Natural killer cell (primary cell): ENCODE measurements at regions of chr1 and their contacts with region 1.

Region 1: DNA sequence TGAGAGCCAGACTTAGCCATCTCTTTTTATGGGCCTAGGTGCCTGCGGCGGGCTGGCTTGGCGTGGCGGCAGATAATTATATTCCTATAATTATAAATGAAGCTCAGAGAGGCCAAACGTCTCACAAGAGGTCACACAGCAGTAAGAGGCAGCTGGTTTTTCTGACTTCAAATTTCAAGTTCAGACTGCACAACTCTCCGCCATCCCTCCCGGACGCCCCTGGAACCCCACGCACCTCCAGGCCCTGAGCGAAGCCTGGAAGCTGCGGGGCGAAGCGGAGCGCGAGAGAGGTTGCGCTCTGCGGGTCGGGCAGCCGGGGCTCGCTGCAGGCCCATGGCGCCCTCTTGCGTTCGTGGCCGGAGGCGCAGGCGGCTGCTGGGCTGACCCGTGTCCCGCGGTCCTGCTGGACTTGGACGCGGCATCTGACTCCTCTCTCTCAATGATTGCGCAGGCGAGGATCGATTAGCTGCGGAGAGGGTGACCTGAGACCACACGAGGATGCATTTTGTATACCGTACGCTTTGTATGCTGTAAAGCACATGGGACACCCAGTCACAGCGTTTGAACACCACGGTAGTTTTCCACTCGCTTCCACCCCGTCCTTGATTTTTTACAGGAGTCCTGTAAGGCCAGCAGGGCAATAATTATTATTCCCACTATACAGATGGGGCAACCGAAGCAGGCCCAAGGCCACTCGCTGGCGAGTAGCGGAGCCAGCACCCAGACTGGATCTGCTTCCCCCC is 272.7 kb downstream of the FOXD2 start:
- DNase-seq: peak; percentile 69 to 74
- ATAC-seq: peak; percentile 74 to 90 (median 75)
- H3K4me3 ChIP-seq: no peak overlapping the region
- H3K4me3 Mint-ChIP-seq: peak overlapping the region; percentile 4
- H3K27ac ChIP-seq: no peak overlapping the region
- H3K27ac Mint-ChIP-seq: no peak overlapping the region
- H3K4me1 ChIP-seq: peaks cover 8% of the 10 kb centered on the region
- H3K4me1 Mint-ChIP-seq: peaks cover 0 to 10% of the 10 kb centered on the region in 2 donors
- H3K27me3 ChIP-seq: peaks cover 29% of the 10 kb centered on the region
- H3K27me3 Mint-ChIP-seq: peaks cover 29 to 58% of the 10 kb centered on the region in 2 donors
- CTCF ChIP-seq: peak; percentile 85

Region 2: DNA sequence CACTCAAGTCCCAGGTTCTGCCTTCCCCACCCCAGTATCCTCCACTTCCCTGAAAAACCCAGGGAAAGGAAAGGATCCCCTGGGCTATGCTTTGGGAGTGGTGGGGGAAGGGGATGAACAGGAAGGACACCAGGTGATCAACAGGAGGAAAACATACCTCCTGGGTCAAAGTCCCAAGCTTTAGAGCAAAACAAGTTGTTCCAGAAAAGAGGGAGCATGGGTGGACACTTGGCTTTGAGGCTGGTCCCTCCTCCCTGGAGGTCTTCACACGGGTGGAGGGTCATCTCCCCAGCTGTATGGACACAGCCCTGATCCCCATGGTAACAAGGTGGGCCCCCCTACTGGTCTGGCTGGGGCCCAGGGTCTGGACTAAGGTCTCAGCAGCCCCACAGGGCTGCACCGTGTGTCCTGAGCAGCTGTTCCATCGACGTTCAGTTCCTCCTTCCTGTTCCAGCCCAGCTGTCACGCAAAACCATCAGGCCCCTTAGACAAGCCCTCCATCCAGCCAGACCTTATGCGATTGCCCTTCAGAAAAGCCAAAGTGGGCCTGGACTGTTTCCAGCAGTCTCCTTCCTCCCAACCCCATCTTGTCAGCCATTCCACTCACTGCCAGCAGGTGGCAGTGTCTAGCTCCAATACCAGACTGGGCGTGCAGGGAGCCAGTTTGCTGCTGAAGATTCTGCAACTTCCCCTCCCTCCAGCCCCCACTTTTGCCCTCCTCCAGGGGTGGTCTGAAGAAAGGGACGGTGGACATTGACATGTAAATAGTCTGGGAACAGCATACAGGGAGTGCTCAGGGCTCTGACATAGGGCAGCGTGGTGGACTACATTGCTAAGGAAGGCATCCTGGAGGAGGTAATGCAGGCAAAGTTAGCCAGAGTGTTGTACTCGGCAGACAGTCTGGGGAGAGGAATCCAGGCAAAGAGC is 517.8 kb before region 1 on chr1:
- intact Hi-C with region 1: loop called (anchors 1 kb)
- DNase-seq: peak; percentile 57 to 80
- ATAC-seq: peak; percentile 77 to 93 (median 86)
- H3K4me3 ChIP-seq: no peak overlapping the region
- H3K4me3 Mint-ChIP-seq: no peak overlapping the region
- H3K27ac ChIP-seq: no peak overlapping the region
- H3K27ac Mint-ChIP-seq: no peak overlapping the region
- H3K4me1 ChIP-seq: peaks cover 4% of the 10 kb centered on the region
- H3K4me1 Mint-ChIP-seq: peaks cover 5% of the 10 kb centered on the region in 2 donors
- H3K27me3 ChIP-seq: no peaks in the 10 kb centered on the region
- H3K27me3 Mint-ChIP-seq: peaks cover 7 to 13% of the 10 kb centered on the region in 2 donors
- CTCF ChIP-seq: peak; percentile 89

Region 3: GRCh38 chr1:47388891-47389238 is 321.6 kb before region 1 on chr1:
- intact Hi-C with region 1: loop called (anchors 2 kb)
- DNase-seq: peak; percentile 25 to 56
- ATAC-seq: peak in 2 of 3 donors; percentile 57 to 73
- H3K4me3 ChIP-seq: no peak overlapping the region
- H3K4me3 Mint-ChIP-seq: no peak overlapping the region
- H3K27ac ChIP-seq: no peak overlapping the region
- H3K27ac Mint-ChIP-seq: no peak overlapping the region
- H3K4me1 ChIP-seq: no peaks in the 10 kb centered on the region
- H3K4me1 Mint-ChIP-seq: no peaks in the 10 kb centered on the region
- H3K27me3 ChIP-seq: no peaks in the 10 kb centered on the region
- H3K27me3 Mint-ChIP-seq: peaks cover 0 to 4% of the 10 kb centered on the region in 2 donors
- CTCF ChIP-seq: peak; percentile 57

Region 4: DNA sequence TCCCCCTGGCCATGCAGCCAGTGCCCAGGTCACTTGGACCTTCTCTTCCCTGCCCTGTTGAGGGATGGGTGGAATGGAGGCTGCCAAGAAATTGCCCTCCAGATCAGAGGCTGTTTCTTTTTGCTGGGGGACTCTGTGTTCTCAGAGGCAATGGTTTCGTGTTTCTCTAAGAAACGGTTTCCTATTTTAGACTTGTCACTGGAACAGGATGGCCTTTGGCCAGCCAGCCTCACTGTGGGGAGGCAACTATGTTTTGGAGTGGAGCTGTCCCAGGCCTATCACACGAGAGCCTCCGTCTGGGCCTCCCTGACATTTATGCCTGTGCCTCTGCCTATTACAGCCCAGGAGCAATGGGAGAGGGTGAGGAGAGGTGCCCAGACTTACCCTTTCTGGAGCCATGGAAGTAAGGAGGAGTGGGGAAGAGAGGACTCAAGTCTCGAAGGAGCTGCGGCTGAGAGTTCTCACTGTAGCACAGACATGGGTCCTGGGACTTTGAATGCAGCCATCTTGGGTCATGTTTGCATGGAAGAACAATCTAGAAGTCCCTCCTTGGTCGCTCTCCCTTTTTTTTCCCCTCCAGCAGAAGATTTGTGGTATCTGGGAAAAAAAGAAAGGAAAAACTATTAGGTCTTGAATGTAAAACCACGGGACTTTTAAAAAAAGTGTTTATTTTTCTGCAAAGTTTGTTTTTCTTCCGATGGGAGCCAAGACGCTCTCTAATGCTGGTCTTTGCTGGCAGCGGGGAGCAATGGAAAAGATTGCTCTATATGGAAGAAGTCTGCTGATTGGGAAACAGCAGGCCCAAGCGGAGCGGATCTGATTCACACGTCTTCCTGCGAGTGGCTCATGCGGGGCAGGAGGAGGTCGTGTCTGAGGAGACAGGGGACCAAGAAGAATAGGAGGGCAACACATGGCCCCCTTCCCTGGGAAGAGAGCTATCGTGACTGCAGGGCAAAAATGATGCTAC is 53.5 kb before region 1 on chr1:
- intact Hi-C with region 1: no loop called
- DNase-seq: no peak
- ATAC-seq: no peak
- H3K4me3 ChIP-seq: no peak overlapping the region
- H3K4me3 Mint-ChIP-seq: no peak overlapping the region
- H3K27ac ChIP-seq: no peak overlapping the region
- H3K27ac Mint-ChIP-seq: no peak overlapping the region
- H3K4me1 ChIP-seq: no peaks in the 10 kb centered on the region
- H3K4me1 Mint-ChIP-seq: no peaks in the 10 kb centered on the region
- H3K27me3 ChIP-seq: no peaks in the 10 kb centered on the region
- H3K27me3 Mint-ChIP-seq: peaks cover 21 to 28% of the 10 kb centered on the region in 2 donors
- CTCF ChIP-seq: no peak